Gastrocnemius medialis (tissue), 4 donors: ENCODE measurements at regions of chr7 and their contacts with region 1.

Region 1: DNA sequence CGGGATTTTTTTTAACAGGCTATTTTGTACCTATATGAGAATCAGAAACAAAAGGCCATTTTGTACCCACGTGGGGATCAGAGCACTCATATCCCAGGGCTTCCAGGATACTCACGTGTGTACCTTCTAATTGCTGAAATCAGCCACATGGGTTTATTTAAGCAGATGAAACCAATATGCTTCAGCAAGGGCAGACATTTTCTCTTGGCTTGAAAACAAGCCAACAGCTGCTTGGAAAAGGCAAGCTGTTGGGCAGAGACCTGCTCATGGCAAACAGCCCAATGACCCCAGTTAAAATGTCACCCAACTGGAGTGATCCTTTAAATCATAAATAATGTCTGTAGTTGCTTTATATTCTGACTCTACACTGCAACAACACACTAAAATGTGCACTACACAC is 26.5 kb upstream of the TOMM7 start:
- DNase-seq: peak; percentile 23 to 61
- ATAC-seq: peak; percentile 29 to 40
- H3K4me3 ChIP-seq: no peak overlapping the region
- H3K27ac ChIP-seq: peak overlapping the region; percentile 87 to 99 (median 94)
- H3K4me1 ChIP-seq: peaks cover 13 to 27% of the 10 kb centered on the region in 2 donors
- H3K27me3 ChIP-seq: no peaks in the 10 kb centered on the region
- CTCF ChIP-seq: no peak
- POLR2A ChIP-seq: no peak

Region 2: GRCh38 chr7:22969010-22969431 is 119.9 kb after region 1 on chr7:
- in situ Hi-C with region 1: no loop called
- intact Hi-C with region 1: loop called (anchors 2 kb)
- DNase-seq: peak; percentile 83 to 92
- ATAC-seq: peak; percentile 86 to 91
- H3K4me3 ChIP-seq: no peak overlapping the region
- H3K27ac ChIP-seq: peak overlapping the region; percentile 81 to 87 (median 84)
- H3K4me1 ChIP-seq: peaks cover 49% of the 10 kb centered on the region in 2 donors
- H3K27me3 ChIP-seq: no peaks in the 10 kb centered on the region
- CTCF ChIP-seq: no peak
- POLR2A ChIP-seq: peak in 1 of 2 donors; percentile 24

Region 3: GRCh38 chr7:23136216-23136615 is 287.1 kb after region 1 on chr7:
- in situ Hi-C with region 1: no loop called
- intact Hi-C with region 1: no loop called
- DNase-seq: no peak
- ATAC-seq: no peak
- H3K4me3 ChIP-seq: no peak overlapping the region
- H3K27ac ChIP-seq: no peak overlapping the region
- H3K4me1 ChIP-seq: no peaks in the 10 kb centered on the region
- H3K27me3 ChIP-seq: no peaks in the 10 kb centered on the region
- CTCF ChIP-seq: no peak
- POLR2A ChIP-seq: no peak